T-cell (primary cell): ENCODE measurements at regions of chr1 and their contacts with region 1.

Region 1: GRCh38 chr1:166479052-166479631 is 312.3 kb upstream of the FAM78B start:
- DNase-seq: peak in 28 of 35 experiments; percentile 5 to 66 (median 30)
- ATAC-seq: no peak
- H3K4me3 ChIP-seq: no peak overlapping the region
- H3K4me3 Mint-ChIP-seq: no peak overlapping the region
- H3K27ac ChIP-seq: no peak overlapping the region
- H3K27ac Mint-ChIP-seq: no peak overlapping the region
- H3K4me1 ChIP-seq: no peaks in the 10 kb centered on the region
- H3K4me1 Mint-ChIP-seq: no peaks in the 10 kb centered on the region
- H3K27me3 ChIP-seq: no peaks in the 10 kb centered on the region
- H3K27me3 Mint-ChIP-seq: peaks cover 0 to 7% of the 10 kb centered on the region in 2 donors

Region 2: GRCh38 chr1:164983023-164983650 is 1496.0 kb before region 1 on chr1:
- CTCF ChIA-PET with region 1: no interaction called
- POLR2A ChIA-PET with region 1: no interaction called
- DNase-seq: no peak
- ATAC-seq: no peak
- H3K4me3 ChIP-seq: no peak overlapping the region
- H3K4me3 Mint-ChIP-seq: no peak overlapping the region
- H3K27ac ChIP-seq: no peak overlapping the region
- H3K27ac Mint-ChIP-seq: no peak overlapping the region
- H3K4me1 ChIP-seq: no peaks in the 10 kb centered on the region
- H3K4me1 Mint-ChIP-seq: no peaks in the 10 kb centered on the region
- H3K27me3 ChIP-seq: no peaks in the 10 kb centered on the region
- H3K27me3 Mint-ChIP-seq: no peaks in the 10 kb centered on the region

Region 3: GRCh38 chr1:166489670-166490436 is 10.7 kb after region 1 on chr1:
- CTCF ChIA-PET with region 1: interaction called, 18 to 37 read pairs
- POLR2A ChIA-PET with region 1: no interaction called
- DNase-seq: peak; percentile 6 to 75 (median 29)
- ATAC-seq: peak; percentile 82 to 87 (median 87)
- H3K4me3 ChIP-seq: peak overlapping the region; percentile 72 to 78
- H3K4me3 Mint-ChIP-seq: no peak overlapping the region
- H3K27ac ChIP-seq: peak overlapping the region; percentile 96
- H3K27ac Mint-ChIP-seq: no peak overlapping the region
- H3K4me1 ChIP-seq: peaks cover 0 to 19% of the 10 kb centered on the region in 2 experiments
- H3K4me1 Mint-ChIP-seq: peaks cover 6 to 21% (median 15%) of the 10 kb centered on the region in 3 donors
- H3K27me3 ChIP-seq: no peaks in the 10 kb centered on the region
- H3K27me3 Mint-ChIP-seq: peaks cover 0 to 5% of the 10 kb centered on the region in 2 donors